AG04450 (cell line): ENCODE measurements at regions of chr17 and their contacts with region 1.

Region 1: GRCh38 chr17:78736526-78737079 is 45.5 kb downstream of the CYTH1 start:
- DNase-seq: no peak
- H3K4me3 ChIP-seq: no peak overlapping the region
- H3K27ac ChIP-seq: no peak overlapping the region
- H3K27me3 ChIP-seq: no peaks in the 10 kb centered on the region
- CTCF ChIP-seq: no peak

Region 2: GRCh38 chr17:78723001-78723796 is 13.4 kb before region 1 on chr17:
- CTCF ChIA-PET with region 1: interaction called, 7 read pairs
- POLR2A ChIA-PET with region 1: interaction called, 10 read pairs
- DNase-seq: no peak
- H3K4me3 ChIP-seq: peak overlapping the region; percentile 37
- H3K27ac ChIP-seq: no peak overlapping the region
- H3K27me3 ChIP-seq: no peaks in the 10 kb centered on the region
- CTCF ChIP-seq: no peak

Region 3: GRCh38 chr17:78769196-78769773 is 32.7 kb after region 1 on chr17:
- CTCF ChIA-PET with region 1: no interaction called
- POLR2A ChIA-PET with region 1: no interaction called
- DNase-seq: no peak
- H3K4me3 ChIP-seq: no peak overlapping the region
- H3K27ac ChIP-seq: no peak overlapping the region
- H3K27me3 ChIP-seq: no peaks in the 10 kb centered on the region
- CTCF ChIP-seq: no peak